Right cardiac atrium (tissue), 5 donors: ENCODE measurements at regions of chr3 and their contacts with region 1.

Region 1: GRCh38 chr3:194134757-194135528 is 1.0 kb upstream of the HES1 start:
- DNase-seq: peak; percentile 95 to 97 (median 97)
- ATAC-seq: peak; percentile 79 to 80
- H3K4me3 ChIP-seq: peak overlapping the region; percentile 70
- H3K27ac ChIP-seq: peak overlapping the region; percentile 96
- H3K4me1 ChIP-seq: peaks cover 4% of the 10 kb centered on the region
- H3K27me3 ChIP-seq: no peaks in the 10 kb centered on the region

Region 2: DNA sequence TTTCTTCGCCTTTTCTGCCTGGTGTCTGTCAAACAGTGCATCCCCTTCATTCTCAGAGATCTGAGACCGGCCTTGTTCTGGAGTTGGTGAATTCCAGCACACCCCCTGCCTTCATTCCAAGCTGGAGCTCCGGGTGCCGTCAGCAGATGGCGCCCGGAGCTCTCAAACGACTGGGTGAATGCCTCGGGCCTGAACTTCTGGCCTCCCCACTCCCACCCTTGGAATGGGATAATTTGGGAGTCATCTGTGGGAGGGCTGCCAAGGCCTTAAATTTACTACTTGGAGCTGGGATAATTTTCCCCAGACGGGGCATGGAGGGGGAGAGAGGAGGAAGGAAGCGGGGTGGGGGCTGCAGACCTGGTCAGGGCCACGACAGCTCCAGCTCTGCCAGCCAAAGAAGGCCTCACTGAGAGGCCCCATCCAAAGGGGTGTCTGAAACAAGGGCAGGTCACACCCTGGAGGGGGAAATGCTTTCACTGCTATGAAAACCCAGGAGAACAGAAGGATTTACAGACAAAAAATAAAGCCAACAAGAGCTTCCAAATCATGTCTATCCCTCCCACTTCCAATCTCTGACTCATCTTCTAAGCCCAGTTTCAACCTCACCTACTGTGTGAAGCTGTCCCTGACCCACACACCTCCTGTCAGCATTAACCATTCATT is 354.0 kb before region 1 on chr3:
- intact Hi-C with region 1: loop called (anchors 5 to 10 kb)
- DNase-seq: peak; percentile 81 to 90 (median 89)
- ATAC-seq: peak; percentile 87 to 92
- H3K4me3 ChIP-seq: no peak overlapping the region
- H3K27ac ChIP-seq: no peak overlapping the region
- H3K4me1 ChIP-seq: peaks cover 2% of the 10 kb centered on the region
- H3K27me3 ChIP-seq: peaks cover 2% of the 10 kb centered on the region

Region 3: DNA sequence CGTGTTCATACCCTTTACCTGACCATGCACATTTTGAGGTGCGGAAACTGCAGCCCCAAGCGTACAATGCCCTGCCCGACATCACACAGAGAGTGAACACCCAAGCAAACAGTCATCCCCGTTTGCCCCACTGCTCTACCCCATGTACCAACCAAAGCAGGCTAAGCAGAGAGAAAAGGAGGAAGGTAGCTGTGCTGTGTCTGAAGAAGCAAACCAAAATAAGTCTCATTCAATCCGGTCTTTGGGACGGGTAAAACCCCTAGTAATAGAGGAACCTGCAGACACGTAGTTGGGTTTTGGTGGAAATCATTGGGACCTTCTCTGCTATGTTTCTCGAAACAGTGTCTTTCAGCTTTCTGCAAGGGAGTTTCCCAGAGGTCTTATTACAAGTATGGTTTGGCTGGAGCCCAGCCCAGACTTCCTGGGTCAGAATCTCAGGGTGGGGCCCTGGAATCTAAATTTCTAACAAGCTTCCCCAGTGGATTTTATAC is 163.6 kb before region 1 on chr3:
- intact Hi-C with region 1: loop called in 1 of 4 experiments (anchors 10 kb)
- DNase-seq: peak in 1 of 3 donors; percentile 65
- ATAC-seq: peak in 1 of 2 donors; percentile 12
- H3K4me3 ChIP-seq: no peak overlapping the region
- H3K27ac ChIP-seq: no peak overlapping the region
- H3K4me1 ChIP-seq: peaks cover 4% of the 10 kb centered on the region
- H3K27me3 ChIP-seq: no peaks in the 10 kb centered on the region

Region 4: GRCh38 chr3:194070634-194071409 is 64.1 kb before region 1 on chr3:
- intact Hi-C with region 1: loop called in 3 of 4 experiments (anchors 5 to 10 kb)
- DNase-seq: peak; percentile 92 to 96 (median 96)
- ATAC-seq: peak; percentile 92 to 94
- H3K4me3 ChIP-seq: peak overlapping the region; percentile 38
- H3K27ac ChIP-seq: peak overlapping the region; percentile 25
- H3K4me1 ChIP-seq: no peaks in the 10 kb centered on the region
- H3K27me3 ChIP-seq: no peaks in the 10 kb centered on the region

Region 5: DNA sequence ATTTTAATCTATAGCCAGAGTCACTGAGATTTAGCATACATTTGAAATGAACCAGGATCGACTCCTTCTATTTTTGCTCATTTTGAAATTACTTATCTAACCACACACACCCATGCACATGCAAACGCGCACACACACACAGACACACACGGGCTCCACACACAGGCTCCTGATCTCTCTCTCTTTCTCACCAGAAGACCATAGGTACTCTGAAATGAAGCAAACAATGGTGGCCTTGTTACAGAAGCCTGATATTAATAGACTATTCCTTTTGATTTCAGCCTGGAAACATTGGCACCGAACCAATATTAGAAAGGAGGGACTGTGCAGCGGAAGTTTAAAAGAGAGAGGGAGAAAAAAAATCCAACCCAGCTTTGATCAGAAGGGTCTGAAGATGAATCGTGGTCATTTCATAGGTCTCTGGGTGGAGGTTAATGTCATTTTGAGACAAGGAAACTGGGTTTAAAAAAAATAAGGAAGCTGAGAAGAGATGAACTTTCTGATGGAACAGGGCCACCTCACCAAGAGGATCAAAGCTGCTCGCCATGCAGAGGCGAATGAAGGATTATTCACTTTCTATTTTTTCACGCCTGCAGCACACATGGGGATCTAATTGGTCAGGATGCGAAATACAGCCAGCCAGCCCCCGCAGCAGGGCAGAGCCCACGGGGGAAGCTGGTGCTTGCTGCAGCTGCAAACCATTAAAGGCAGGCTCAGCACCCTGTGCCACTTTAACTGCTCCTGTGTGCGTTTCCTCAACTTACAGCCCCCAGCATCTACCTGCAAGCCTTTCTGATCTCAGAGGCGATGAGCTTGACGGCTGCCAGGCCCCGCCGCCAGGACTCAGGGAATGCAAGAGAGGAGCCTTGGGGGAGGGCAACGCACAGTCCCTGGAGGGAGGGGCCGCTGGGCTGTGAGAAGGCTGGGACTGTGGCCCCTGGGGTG is 89.8 kb after region 1 on chr3:
- intact Hi-C with region 1: no loop called
- DNase-seq: peak in 1 of 3 donors; percentile 60
- ATAC-seq: peak in 1 of 2 donors; percentile 10
- H3K4me3 ChIP-seq: no peak overlapping the region
- H3K27ac ChIP-seq: no peak overlapping the region
- H3K4me1 ChIP-seq: no peaks in the 10 kb centered on the region
- H3K27me3 ChIP-seq: no peaks in the 10 kb centered on the region

Region 6: GRCh38 chr3:194294199-194294894 is 159.4 kb after region 1 on chr3:
- intact Hi-C with region 1: no loop called
- DNase-seq: no peak
- ATAC-seq: no peak
- H3K4me3 ChIP-seq: no peak overlapping the region
- H3K27ac ChIP-seq: no peak overlapping the region
- H3K4me1 ChIP-seq: no peaks in the 10 kb centered on the region
- H3K27me3 ChIP-seq: no peaks in the 10 kb centered on the region

Region 7: GRCh38 chr3:194315088-194315964 is 180.4 kb after region 1 on chr3:
- intact Hi-C with region 1: loop called (anchors 5 to 10 kb)
- DNase-seq: peak; percentile 93 to 96 (median 95)
- ATAC-seq: peak; percentile 91 to 95
- H3K4me3 ChIP-seq: peak overlapping the region; percentile 41
- H3K27ac ChIP-seq: no peak overlapping the region
- H3K4me1 ChIP-seq: peaks cover 2% of the 10 kb centered on the region
- H3K27me3 ChIP-seq: no peaks in the 10 kb centered on the region